Calu3 (cell line): ENCODE measurements at regions of chr1 and their contacts with region 1.

Region 1: GRCh38 chr1:204806943-204807687 is 63.5 kb upstream of the NFASC start:
- DNase-seq: peak; percentile 90
- H3K4me3 Mint-ChIP-seq: peak overlapping the region; percentile 66
- H3K27ac Mint-ChIP-seq: no peak overlapping the region
- H3K4me1 Mint-ChIP-seq: no peaks in the 10 kb centered on the region
- H3K27me3 Mint-ChIP-seq: peaks cover 42% of the 10 kb centered on the region
- CTCF ChIP-seq: peak; percentile 100

Region 2: GRCh38 chr1:204506961-204507387 is 300.1 kb before region 1 on chr1:
- CTCF ChIA-PET with region 1: interaction called, 23 read pairs
- intact Hi-C with region 1: no loop called
- DNase-seq: peak; percentile 92
- H3K4me3 Mint-ChIP-seq: peak overlapping the region; percentile 71
- H3K27ac Mint-ChIP-seq: peak overlapping the region; percentile 100
- H3K4me1 Mint-ChIP-seq: peaks cover 45% of the 10 kb centered on the region
- H3K27me3 Mint-ChIP-seq: peaks cover 14% of the 10 kb centered on the region
- CTCF ChIP-seq: no peak

Region 3: DNA sequence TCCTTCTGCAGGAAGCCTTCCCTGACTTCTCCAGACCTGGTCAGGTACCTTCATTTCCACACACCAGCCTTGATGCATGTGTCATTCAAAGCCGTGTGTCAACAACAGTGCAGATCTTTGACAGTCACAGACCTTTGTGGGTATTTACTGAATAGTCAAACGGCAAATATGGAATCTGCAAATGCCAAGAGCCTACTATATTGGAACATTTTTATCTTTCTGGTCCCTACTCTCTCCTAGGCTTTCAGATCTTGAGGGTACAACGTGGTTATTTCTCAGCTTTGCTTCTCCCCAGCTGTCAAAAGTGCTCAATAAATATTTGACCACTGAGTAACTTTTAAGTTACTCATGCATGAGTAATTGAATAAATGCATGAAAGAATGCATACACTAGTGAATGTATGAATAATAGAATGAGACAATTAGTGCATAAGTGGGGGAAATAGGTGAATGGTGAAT is 215.5 kb before region 1 on chr1:
- CTCF ChIA-PET with region 1: interaction called, 14 read pairs
- intact Hi-C with region 1: no loop called
- DNase-seq: peak; percentile 21
- H3K4me3 Mint-ChIP-seq: no peak overlapping the region
- H3K27ac Mint-ChIP-seq: peak overlapping the region; percentile 40
- H3K4me1 Mint-ChIP-seq: peaks cover 39% of the 10 kb centered on the region
- H3K27me3 Mint-ChIP-seq: no peaks in the 10 kb centered on the region
- CTCF ChIP-seq: no peak

Region 4: GRCh38 chr1:204751894-204752687 is 55.0 kb before region 1 on chr1:
- CTCF ChIA-PET with region 1: interaction called, 13 read pairs
- intact Hi-C with region 1: no loop called
- DNase-seq: peak; percentile 85
- H3K4me3 Mint-ChIP-seq: no peak overlapping the region
- H3K27ac Mint-ChIP-seq: no peak overlapping the region
- H3K4me1 Mint-ChIP-seq: peaks cover 7% of the 10 kb centered on the region
- H3K27me3 Mint-ChIP-seq: peaks cover 57% of the 10 kb centered on the region
- CTCF ChIP-seq: peak; percentile 26

Region 5: DNA sequence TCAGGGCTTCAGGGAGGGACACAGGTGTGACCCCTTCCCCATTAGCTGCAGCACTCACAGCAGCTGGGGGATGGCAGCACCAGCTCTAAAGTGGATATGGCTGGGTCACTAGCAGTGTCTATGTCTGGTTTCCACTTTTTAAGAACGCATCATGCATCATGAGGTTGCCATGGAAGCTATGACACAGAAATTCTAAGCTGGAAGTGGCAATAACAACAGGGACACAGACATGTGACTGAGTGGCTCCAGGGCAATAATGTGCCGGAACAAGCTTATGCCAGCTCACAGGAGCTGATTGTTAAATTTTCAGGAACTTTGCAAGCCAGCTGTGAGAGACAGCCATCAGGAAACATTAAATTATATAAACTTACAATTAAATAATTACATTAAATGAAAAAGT is 12.4 kb after region 1 on chr1:
- CTCF ChIA-PET with region 1: interaction called, 10 read pairs
- intact Hi-C with region 1: no loop called
- DNase-seq: no peak
- H3K4me3 Mint-ChIP-seq: no peak overlapping the region
- H3K27ac Mint-ChIP-seq: no peak overlapping the region
- H3K4me1 Mint-ChIP-seq: no peaks in the 10 kb centered on the region
- H3K27me3 Mint-ChIP-seq: peaks cover 99% of the 10 kb centered on the region
- CTCF ChIP-seq: no peak

Region 6: GRCh38 chr1:205578780-205579606 is 771.9 kb after region 1 on chr1:
- CTCF ChIA-PET with region 1: no interaction called
- intact Hi-C with region 1: no loop called
- DNase-seq: peak; percentile 50
- H3K4me3 Mint-ChIP-seq: no peak overlapping the region
- H3K27ac Mint-ChIP-seq: no peak overlapping the region
- H3K4me1 Mint-ChIP-seq: peaks cover 43% of the 10 kb centered on the region
- H3K27me3 Mint-ChIP-seq: peaks cover 19% of the 10 kb centered on the region
- CTCF ChIP-seq: no peak